ENCODE measurements at regions of chr20 and their contacts with region 1.

Region 1: GRCh38 chr20:16709017-16709416 is 20.8 kb upstream of the SNRPB2 start:
- DNase-seq: peak in 7 of 9 donors; percentile 16 to 62 (median 45)
- ATAC-seq: peak; percentile 79
- H3K4me3 ChIP-seq: no peak overlapping the region
- H3K4me3 Mint-ChIP-seq: peak overlapping the region in 9 of 10 donors; percentile 25 to 81 (median 63)
- H3K27ac ChIP-seq: no peak overlapping the region
- H3K27ac Mint-ChIP-seq: peak overlapping the region in 7 of 9 donors; percentile 32 to 79 (median 45)
- H3K4me1 ChIP-seq: peaks cover 17 to 27% of the 10 kb centered on the region in 2 donors
- H3K4me1 Mint-ChIP-seq: peaks cover 26 to 52% (median 42%) of the 10 kb centered on the region in 7 donors
- H3K27me3 ChIP-seq: no peaks in the 10 kb centered on the region
- H3K27me3 Mint-ChIP-seq: peaks cover 0 to 40% (median 9%) of the 10 kb centered on the region in 5 donors

Region 2: DNA sequence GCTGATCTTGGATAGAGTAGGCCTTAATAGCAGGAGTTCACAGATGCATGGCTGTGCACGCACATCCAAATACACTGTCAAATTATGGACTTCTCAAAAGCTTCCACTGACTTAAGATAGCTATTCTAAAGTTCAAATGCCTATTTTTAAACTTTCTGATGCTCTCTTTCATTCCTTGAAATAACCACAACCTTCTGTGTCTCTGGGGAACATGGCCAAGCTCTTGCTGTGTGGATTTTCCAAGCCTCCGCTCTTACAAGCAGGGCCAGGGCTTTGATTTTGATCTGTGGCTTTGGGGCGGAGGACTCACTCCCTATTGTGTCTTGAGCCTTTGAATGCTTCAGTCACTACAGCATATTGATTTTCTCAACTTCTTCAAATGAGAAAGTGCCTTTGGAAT is 14.9 kb before region 1 on chr20:
- CTCF ChIA-PET with region 1: no interaction called
- POLR2A ChIA-PET with region 1: no interaction called
- intact Hi-C with region 1: no loop called
- DNase-seq: no peak
- ATAC-seq: no peak
- H3K4me3 ChIP-seq: no peak overlapping the region
- H3K4me3 Mint-ChIP-seq: no peak overlapping the region
- H3K27ac ChIP-seq: no peak overlapping the region
- H3K27ac Mint-ChIP-seq: no peak overlapping the region
- H3K4me1 ChIP-seq: peaks cover 0 to 3% of the 10 kb centered on the region in 2 donors
- H3K4me1 Mint-ChIP-seq: peaks cover 0 to 15% (median 10%) of the 10 kb centered on the region in 7 donors
- H3K27me3 ChIP-seq: no peaks in the 10 kb centered on the region
- H3K27me3 Mint-ChIP-seq: peaks cover 2 to 15% (median 8%) of the 10 kb centered on the region in 5 donors

Region 3: GRCh38 chr20:16744178-16744814 is 35.3 kb after region 1 on chr20:
- CTCF ChIA-PET with region 1: no interaction called
- POLR2A ChIA-PET with region 1: no interaction called
- intact Hi-C with region 1: loop called in 1 of 2 experiments (anchors 5 kb)
- DNase-seq: no peak
- ATAC-seq: no peak
- H3K4me3 ChIP-seq: no peak overlapping the region
- H3K4me3 Mint-ChIP-seq: no peak overlapping the region
- H3K27ac ChIP-seq: no peak overlapping the region
- H3K27ac Mint-ChIP-seq: no peak overlapping the region
- H3K4me1 ChIP-seq: no peaks in the 10 kb centered on the region
- H3K4me1 Mint-ChIP-seq: peaks cover 0 to 5% (median 0%) of the 10 kb centered on the region in 7 donors
- H3K27me3 ChIP-seq: no peaks in the 10 kb centered on the region
- H3K27me3 Mint-ChIP-seq: peaks cover 0 to 21% (median 8%) of the 10 kb centered on the region in 5 donors

Measured in naive thymus-derived CD4-positive, alpha-beta T cell (primary cell).